Activated T-helper 2 cell treated with anti-CD3 and anti-CD28 coated beads, Interferon-gamma antibody, Interleukin-2, Interleukin-4, amounts not matched to agents 10 μg/mL and 5 μg/mL and 100 μg/mL, durations not matched to agents 14 hours and 24 hours and 36 hours (primary cell): ENCODE measurements at regions of chr2 and their contacts with region 1.

Region 1: GRCh38 chr2:137467246-137467862 is 496.9 kb upstream of the HNMT start:
- DNase-seq: no peak
- H3K4me3 Mint-ChIP-seq: no peak overlapping the region
- H3K27ac Mint-ChIP-seq: no peak overlapping the region
- H3K4me1 Mint-ChIP-seq: no peaks in the 10 kb centered on the region
- H3K27me3 Mint-ChIP-seq: no peaks in the 10 kb centered on the region

Region 2: DNA sequence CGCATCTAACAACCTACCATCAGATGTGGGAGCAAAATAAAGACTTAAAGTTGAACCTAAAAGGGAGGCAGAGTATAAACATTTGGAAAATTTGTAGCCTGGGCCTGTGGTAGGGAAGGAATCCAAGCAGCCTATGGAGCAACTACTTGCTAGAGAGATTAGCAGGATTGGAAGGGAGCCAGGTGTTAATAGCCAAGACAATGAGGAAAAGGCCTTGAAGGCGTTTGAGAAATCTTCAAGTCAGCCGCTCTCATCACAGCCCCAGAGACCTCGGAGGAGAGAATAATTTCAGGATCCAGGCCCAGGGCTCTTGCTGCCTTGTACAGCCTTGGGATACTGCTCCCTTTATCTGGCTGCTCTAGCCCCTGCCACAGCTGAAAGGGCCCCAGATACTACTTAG is 482.3 kb before region 1 on chr2:
- intact Hi-C with region 1: no loop called
- DNase-seq: no peak
- H3K4me3 Mint-ChIP-seq: no peak overlapping the region
- H3K27ac Mint-ChIP-seq: no peak overlapping the region
- H3K4me1 Mint-ChIP-seq: no peaks in the 10 kb centered on the region
- H3K27me3 Mint-ChIP-seq: no peaks in the 10 kb centered on the region

Region 3: GRCh38 chr2:137838255-137839092 is 371.1 kb after region 1 on chr2:
- intact Hi-C with region 1: loop called (anchors 2 kb)
- DNase-seq: no peak
- H3K4me3 Mint-ChIP-seq: no peak overlapping the region
- H3K27ac Mint-ChIP-seq: no peak overlapping the region
- H3K4me1 Mint-ChIP-seq: no peaks in the 10 kb centered on the region
- H3K27me3 Mint-ChIP-seq: peaks cover 2% of the 10 kb centered on the region